Endothelial cell of umbilical vein (primary cell): ENCODE measurements at regions of chrX and their contacts with region 1.

Region 1: GRCh38 chrX:12814420-12814819 is 23.2 kb downstream of the PRPS2 start:
- DNase-seq: peak; percentile 65
- H3K4me3 ChIP-seq: no peak overlapping the region
- H3K27ac ChIP-seq: no peak overlapping the region
- H3K4me1 ChIP-seq: no peaks in the 10 kb centered on the region
- H3K27me3 ChIP-seq: no peaks in the 10 kb centered on the region
- CTCF ChIP-seq: peak; percentile 28 to 29
- POLR2A ChIP-seq: no peak

Region 2: DNA sequence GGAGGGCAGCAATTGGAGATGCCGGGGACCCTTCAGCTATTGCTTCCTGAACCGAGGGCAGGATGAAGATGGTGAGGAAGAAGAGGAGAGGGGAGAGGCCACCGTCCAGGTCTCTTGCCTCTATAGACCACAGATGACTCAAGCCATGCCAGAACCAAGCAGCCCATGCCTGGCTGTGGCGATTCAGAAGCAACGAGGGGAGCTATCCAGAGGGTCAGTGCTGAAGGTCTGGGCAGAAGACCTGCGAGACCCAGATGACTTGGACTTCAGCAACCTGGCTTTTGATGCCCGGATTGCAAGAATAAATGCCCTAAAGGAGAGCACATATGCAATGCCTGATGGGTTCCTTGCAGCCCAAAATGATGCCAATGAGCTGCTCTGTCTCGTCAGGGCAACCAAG is 93.4 kb before region 1 on chrX:
- CTCF ChIA-PET with region 1: no interaction called
- POLR2A ChIA-PET with region 1: no interaction called
- dilution Hi-C with region 1: no loop called
- intact Hi-C with region 1: no loop called
- DNase-seq: no peak
- H3K4me3 ChIP-seq: no peak overlapping the region
- H3K27ac ChIP-seq: no peak overlapping the region
- H3K4me1 ChIP-seq: no peaks in the 10 kb centered on the region
- H3K27me3 ChIP-seq: no peaks in the 10 kb centered on the region
- CTCF ChIP-seq: no peak
- POLR2A ChIP-seq: no peak

Region 3: DNA sequence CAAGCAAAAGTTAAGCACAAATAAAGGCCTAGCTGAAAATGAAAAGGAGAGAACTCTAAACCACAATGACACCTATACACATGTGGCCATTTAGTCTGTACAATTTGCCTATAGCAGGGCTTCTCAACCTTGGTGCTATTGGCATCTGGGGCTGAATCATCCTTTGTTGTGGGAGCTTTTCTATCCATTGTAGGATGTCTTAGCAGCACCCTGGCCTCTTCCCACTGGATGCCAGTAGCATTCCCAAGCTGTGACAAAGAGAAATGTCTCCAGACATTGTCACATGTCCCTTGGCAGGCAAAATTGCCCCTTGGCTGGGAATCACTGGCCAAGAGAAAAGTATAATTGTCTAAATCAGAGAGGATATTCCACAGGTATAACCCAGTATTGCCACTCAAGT is 36.8 kb before region 1 on chrX:
- CTCF ChIA-PET with region 1: no interaction called
- POLR2A ChIA-PET with region 1: no interaction called
- dilution Hi-C with region 1: no loop called
- intact Hi-C with region 1: no loop called
- DNase-seq: no peak
- H3K4me3 ChIP-seq: no peak overlapping the region
- H3K27ac ChIP-seq: no peak overlapping the region
- H3K4me1 ChIP-seq: no peaks in the 10 kb centered on the region
- H3K27me3 ChIP-seq: peaks cover 0 to under 1% of the 10 kb centered on the region in 2 experiments
- CTCF ChIP-seq: no peak
- POLR2A ChIP-seq: no peak

Region 4: GRCh38 chrX:12825801-12826200 is 11.4 kb after region 1 on chrX:
- CTCF ChIA-PET with region 1: interaction called, 10 read pairs
- POLR2A ChIA-PET with region 1: no interaction called
- dilution Hi-C with region 1: no loop called
- intact Hi-C with region 1: no loop called
- DNase-seq: peak; percentile 44
- H3K4me3 ChIP-seq: no peak overlapping the region
- H3K27ac ChIP-seq: no peak overlapping the region
- H3K4me1 ChIP-seq: peaks cover 9% of the 10 kb centered on the region
- H3K27me3 ChIP-seq: peaks cover 0 to 3% of the 10 kb centered on the region in 2 experiments
- CTCF ChIP-seq: no peak
- POLR2A ChIP-seq: no peak

Region 5: GRCh38 chrX:12894074-12895030 is 79.9 kb after region 1 on chrX:
- CTCF ChIA-PET with region 1: interaction called, 35 read pairs
- POLR2A ChIA-PET with region 1: no interaction called
- dilution Hi-C with region 1: no loop called
- intact Hi-C with region 1: loop called (anchors 1 kb)
- DNase-seq: peak; percentile 38
- H3K4me3 ChIP-seq: no peak overlapping the region
- H3K27ac ChIP-seq: no peak overlapping the region
- H3K4me1 ChIP-seq: peaks cover 2% of the 10 kb centered on the region
- H3K27me3 ChIP-seq: peaks cover 0 to 2% of the 10 kb centered on the region in 2 experiments
- CTCF ChIP-seq: peak; percentile 52 to 65
- POLR2A ChIP-seq: no peak

Region 6: DNA sequence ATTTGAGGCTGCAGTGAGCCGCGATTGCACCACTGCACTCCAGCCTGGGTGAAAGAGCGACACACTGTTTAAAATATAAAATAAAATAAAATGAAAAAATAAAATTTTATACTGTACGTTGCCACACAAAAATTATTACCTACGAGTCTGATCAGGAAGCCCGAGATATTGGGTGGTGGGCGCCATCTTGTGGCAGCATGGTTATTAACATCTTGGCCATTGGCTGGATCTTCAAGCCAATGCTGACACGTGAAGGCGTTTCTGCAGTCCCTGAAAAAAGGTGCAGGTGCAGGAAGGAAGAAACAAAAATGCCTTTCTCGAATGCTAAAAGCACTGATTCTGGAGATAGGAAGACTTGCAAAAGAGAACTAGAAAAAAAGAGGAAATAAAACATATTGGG is 87.1 kb after region 1 on chrX:
- CTCF ChIA-PET with region 1: interaction called, 35 read pairs
- POLR2A ChIA-PET with region 1: no interaction called
- dilution Hi-C with region 1: no loop called
- intact Hi-C with region 1: loop called (anchors 1 kb)
- DNase-seq: peak; percentile 41
- H3K4me3 ChIP-seq: no peak overlapping the region
- H3K27ac ChIP-seq: no peak overlapping the region
- H3K4me1 ChIP-seq: no peaks in the 10 kb centered on the region
- H3K27me3 ChIP-seq: peaks cover 0 to 2% of the 10 kb centered on the region in 2 experiments
- CTCF ChIP-seq: peak; percentile 47 to 59
- POLR2A ChIP-seq: no peak

Region 7: DNA sequence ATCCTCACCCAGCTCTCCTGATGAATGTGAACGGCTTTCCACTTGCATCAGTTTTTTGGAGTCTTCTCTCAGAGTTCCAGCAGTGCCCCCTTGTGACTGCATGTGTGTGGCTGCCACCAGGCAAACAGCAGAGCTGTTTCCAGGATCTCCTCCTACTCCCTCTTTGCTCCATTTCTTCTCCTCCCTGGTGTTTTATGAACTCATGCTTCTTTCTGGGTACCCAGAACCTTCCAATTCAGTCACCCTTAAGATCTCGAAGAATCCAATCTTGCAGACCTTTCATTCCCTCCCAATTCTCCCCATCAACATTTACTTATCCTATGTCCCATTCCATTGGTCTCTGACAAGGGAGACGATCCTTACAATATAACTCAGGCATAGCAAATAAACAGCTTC is 831.7 kb after region 1 on chrX:
- CTCF ChIA-PET with region 1: interaction called, 13 read pairs
- POLR2A ChIA-PET with region 1: interaction called, 8 read pairs
- dilution Hi-C with region 1: no loop called
- intact Hi-C with region 1: no loop called
- DNase-seq: peak; percentile 42
- H3K4me3 ChIP-seq: no peak overlapping the region
- H3K27ac ChIP-seq: no peak overlapping the region
- H3K4me1 ChIP-seq: peaks cover 3% of the 10 kb centered on the region
- H3K27me3 ChIP-seq: no peaks in the 10 kb centered on the region
- CTCF ChIP-seq: peak; percentile 46 to 59
- POLR2A ChIP-seq: no peak